ENCODE measurements at regions of chr7 and their contacts with region 1.

Region 1: DNA sequence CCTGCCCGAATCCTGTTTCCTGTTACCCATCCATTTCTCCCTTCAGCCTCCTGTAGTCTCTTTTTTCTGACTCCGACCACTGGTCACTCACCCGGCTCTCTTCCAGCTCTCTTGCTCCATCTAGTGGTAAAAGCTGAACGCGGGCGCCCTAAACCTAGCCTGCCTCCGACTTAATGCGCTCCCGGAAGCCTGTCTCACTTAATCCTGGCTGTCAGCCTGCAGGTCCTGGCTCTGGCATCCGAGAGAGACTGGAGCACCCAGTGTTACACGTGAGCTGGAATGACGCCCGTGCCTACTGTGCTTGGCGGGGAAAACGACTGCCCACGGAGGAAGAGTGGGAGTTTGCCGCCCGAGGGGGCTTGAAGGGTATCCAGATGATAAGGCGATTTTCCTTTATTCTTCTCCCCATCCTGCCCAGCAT is 10.3 kb downstream of the SUMF2 start:
- DNase-seq: no peak
- ATAC-seq: peak; percentile 99
- H3K4me3 ChIP-seq: no peak overlapping the region
- H3K27ac ChIP-seq: no peak overlapping the region
- H3K4me1 ChIP-seq: no peaks in the 10 kb centered on the region
- H3K27me3 ChIP-seq: no peaks in the 10 kb centered on the region
- CTCF ChIP-seq: peak; percentile 85 to 90 (median 86)
- EP300 ChIP-seq: no peak
- POLR2A ChIP-seq: no peak
- RAD21 ChIP-seq: peak; percentile 91

Region 2: GRCh38 chr7:55893940-55894339 is 180.4 kb before region 1 on chr7:
- CTCF ChIA-PET with region 1: no interaction called
- POLR2A ChIA-PET with region 1: interaction called, 3 read pairs
- RAD21 ChIA-PET with region 1: no interaction called
- SMC1A ChIA-PET with region 1: no interaction called
- in situ Hi-C with region 1: no loop called
- intact Hi-C with region 1: loop called (anchors 5 kb)
- DNase-seq: no peak
- ATAC-seq: no peak
- H3K4me3 ChIP-seq: no peak overlapping the region
- H3K27ac ChIP-seq: no peak overlapping the region
- H3K4me1 ChIP-seq: no peaks in the 10 kb centered on the region
- H3K27me3 ChIP-seq: no peaks in the 10 kb centered on the region
- CTCF ChIP-seq: no peak
- EP300 ChIP-seq: no peak
- POLR2A ChIP-seq: no peak
- RAD21 ChIP-seq: no peak

Region 3: DNA sequence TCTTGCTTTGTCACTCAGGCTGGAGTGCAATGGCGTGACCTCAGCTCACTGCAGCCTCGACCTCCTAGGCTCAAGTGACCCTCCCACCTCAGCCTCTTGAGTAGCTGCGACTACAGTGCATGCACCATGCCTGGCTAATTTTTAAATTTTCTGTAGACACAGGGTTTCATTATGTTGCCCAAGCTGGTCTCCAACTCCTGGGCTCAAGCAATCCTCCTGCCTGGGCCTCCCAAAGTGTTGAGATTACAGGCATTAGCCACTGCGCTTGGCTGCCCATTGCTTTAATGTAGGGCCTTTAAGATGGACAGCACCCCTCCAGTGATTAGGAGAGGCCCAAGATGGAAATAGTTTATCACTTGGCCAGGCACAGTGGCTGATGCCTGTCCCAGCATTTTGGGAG is 70.6 kb before region 1 on chr7:
- CTCF ChIA-PET with region 1: interaction called, 95 read pairs
- POLR2A ChIA-PET with region 1: no interaction called
- RAD21 ChIA-PET with region 1: interaction called, 18 read pairs
- SMC1A ChIA-PET with region 1: interaction called, 6 read pairs
- in situ Hi-C with region 1: loop called (anchors 5 kb)
- intact Hi-C with region 1: loop called (anchors 1 kb)
- DNase-seq: no peak
- ATAC-seq: no peak
- H3K4me3 ChIP-seq: no peak overlapping the region
- H3K27ac ChIP-seq: no peak overlapping the region
- H3K4me1 ChIP-seq: no peaks in the 10 kb centered on the region
- H3K27me3 ChIP-seq: no peaks in the 10 kb centered on the region
- CTCF ChIP-seq: no peak
- EP300 ChIP-seq: no peak
- POLR2A ChIP-seq: no peak
- RAD21 ChIP-seq: no peak

Region 4: GRCh38 chr7:56063882-56064625 is 10.3 kb before region 1 on chr7 and contains the start of gene SUMF2:
- CTCF ChIA-PET with region 1: interaction called, 34 read pairs
- POLR2A ChIA-PET with region 1: interaction called, 3 read pairs
- RAD21 ChIA-PET with region 1: interaction called, 11 read pairs
- SMC1A ChIA-PET with region 1: interaction called, 4 read pairs
- in situ Hi-C with region 1: no loop called
- intact Hi-C with region 1: no loop called
- DNase-seq: peak; percentile 78
- ATAC-seq: peak; percentile 95
- H3K4me3 ChIP-seq: peak within 1 kb of the TSS; percentile 72
- H3K27ac ChIP-seq: peak within 1 kb of the TSS; percentile 71
- H3K4me1 ChIP-seq: peaks cover 6% of the 10 kb centered on the region; the same call in 1 of the 2 replicates
- H3K27me3 ChIP-seq: no peaks in the 10 kb centered on the region
- CTCF ChIP-seq: peak in 2 of 3 experiments; percentile 12 to 32; a peak in 2 of 6 replicates
- EP300 ChIP-seq: no peak
- POLR2A ChIP-seq: peak; percentile 99
- RAD21 ChIP-seq: no peak
- polyA plus RNA-seq, gene SUMF2: 39.9 to 62.4 TPM

Measured in GM12878 (cell line).